Naive thymus-derived CD4-positive, alpha-beta T cell (primary cell): ENCODE measurements at regions of chr5 and their contacts with region 1.

Region 1: DNA sequence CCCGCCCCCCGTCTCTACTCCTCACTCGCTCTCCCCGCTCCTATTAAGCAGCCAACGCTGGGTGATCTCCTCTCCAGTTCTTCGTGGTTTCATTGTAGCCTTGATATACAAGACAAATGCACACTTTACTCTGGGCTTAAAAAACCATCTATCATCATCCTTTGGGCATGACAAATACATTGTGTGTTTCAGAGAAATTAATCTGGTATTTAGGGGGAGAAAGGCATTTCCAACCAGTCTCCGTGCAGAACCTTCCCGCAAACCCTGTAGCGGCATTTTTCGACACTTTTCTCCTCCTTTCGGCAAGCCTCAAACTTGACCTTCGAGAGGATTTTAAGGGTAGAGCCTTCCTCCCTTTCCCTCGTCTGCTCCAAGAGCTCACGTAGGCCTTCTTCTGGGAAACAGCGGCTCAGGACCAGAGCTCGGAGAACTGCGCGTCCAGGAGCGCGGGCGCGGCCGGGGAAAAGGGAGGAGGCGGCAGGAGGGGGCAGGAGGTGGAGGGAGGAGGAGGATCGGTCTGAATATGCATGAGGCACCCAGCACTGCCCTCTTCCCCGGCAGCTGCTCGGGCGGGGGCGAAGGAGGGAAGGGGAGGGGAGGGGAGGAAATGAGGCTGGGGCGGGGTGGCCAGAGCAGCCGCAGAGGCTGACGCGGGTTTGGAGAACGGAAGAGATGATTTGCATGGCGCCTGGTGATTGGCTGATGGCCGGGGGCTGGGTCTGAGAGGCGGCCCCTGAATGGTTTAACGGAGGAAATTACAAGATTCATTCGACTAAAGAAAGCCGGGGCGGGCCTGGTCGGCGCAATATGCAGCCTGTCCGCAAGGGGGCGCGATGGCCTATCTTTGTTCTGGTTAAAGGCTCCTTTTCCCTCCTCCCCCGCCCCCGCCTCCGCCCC is 127.5 kb downstream of the TMEM161B start:
- DNase-seq: peak; percentile 50 to 83 (median 60)
- ATAC-seq: peak; percentile 92
- H3K4me3 ChIP-seq: peak overlapping the region; percentile 43
- H3K4me3 Mint-ChIP-seq: no peak overlapping the region
- H3K27ac ChIP-seq: no peak overlapping the region
- H3K27ac Mint-ChIP-seq: no peak overlapping the region
- H3K4me1 ChIP-seq: peaks cover 19 to 24% of the 10 kb centered on the region in 2 donors
- H3K4me1 Mint-ChIP-seq: peaks cover 7 to 22% (median 9%) of the 10 kb centered on the region in 7 donors
- H3K27me3 ChIP-seq: peaks cover 17 to 28% of the 10 kb centered on the region in 2 donors
- H3K27me3 Mint-ChIP-seq: peaks cover 18 to 44% (median 38%) of the 10 kb centered on the region in 5 donors

Region 2: GRCh38 chr5:88188458-88189132 is 47.5 kb after region 1 on chr5:
- CTCF ChIA-PET with region 1: no interaction called
- POLR2A ChIA-PET with region 1: no interaction called
- intact Hi-C with region 1: loop called in 1 of 2 experiments (anchors 5 kb)
- DNase-seq: no peak
- ATAC-seq: no peak
- H3K4me3 ChIP-seq: no peak overlapping the region
- H3K4me3 Mint-ChIP-seq: no peak overlapping the region
- H3K27ac ChIP-seq: no peak overlapping the region
- H3K27ac Mint-ChIP-seq: no peak overlapping the region
- H3K4me1 ChIP-seq: no peaks in the 10 kb centered on the region
- H3K4me1 Mint-ChIP-seq: no peaks in the 10 kb centered on the region
- H3K27me3 ChIP-seq: no peaks in the 10 kb centered on the region
- H3K27me3 Mint-ChIP-seq: no peaks in the 10 kb centered on the region

Region 3: DNA sequence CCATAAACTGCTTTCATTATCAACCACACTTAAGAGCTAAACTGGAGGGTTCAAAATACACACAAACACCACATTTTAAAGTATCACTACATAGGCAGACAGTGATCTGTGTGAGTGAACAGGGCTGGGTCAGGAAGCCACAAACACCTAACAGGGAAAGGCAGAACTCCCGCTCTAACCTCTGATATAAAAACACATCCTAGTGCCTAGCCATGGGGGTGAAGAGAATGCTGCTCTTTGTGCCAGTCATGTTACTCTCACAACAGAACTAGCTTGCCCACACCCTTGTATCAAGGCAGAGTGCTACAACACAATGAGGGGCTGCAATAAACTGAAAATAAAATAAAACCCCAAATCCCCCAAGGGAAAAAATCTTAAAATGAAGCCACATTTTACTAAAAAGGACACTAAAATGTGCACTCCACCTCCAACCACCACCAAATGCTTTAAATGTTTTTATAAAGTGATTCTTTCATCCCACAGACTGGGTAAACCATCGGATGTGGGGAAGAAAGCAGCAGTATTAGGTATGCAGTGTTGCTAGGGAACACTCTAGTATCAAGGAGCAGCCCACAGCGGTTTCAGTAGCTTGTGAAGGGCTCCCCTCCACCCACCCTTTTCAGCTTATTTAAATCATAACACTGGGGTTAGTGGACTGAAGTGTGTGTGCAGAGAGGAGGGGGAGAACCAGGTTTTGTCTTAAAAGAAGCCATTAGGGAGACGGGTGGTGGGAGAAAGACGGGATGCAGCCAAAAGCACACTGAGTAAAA is 63.1 kb after region 1 on chr5:
- CTCF ChIA-PET with region 1: no interaction called
- POLR2A ChIA-PET with region 1: no interaction called
- intact Hi-C with region 1: loop called in 1 of 2 experiments (anchors 5 kb)
- DNase-seq: peak in 7 of 9 donors; percentile 6 to 49 (median 29)
- ATAC-seq: peak; percentile 95
- H3K4me3 ChIP-seq: no peak overlapping the region
- H3K4me3 Mint-ChIP-seq: peak overlapping the region in 7 of 10 donors; percentile 33 to 73 (median 61)
- H3K27ac ChIP-seq: no peak overlapping the region
- H3K27ac Mint-ChIP-seq: peak overlapping the region; percentile 16 to 91 (median 69)
- H3K4me1 ChIP-seq: peaks cover 0 to 7% of the 10 kb centered on the region in 2 donors
- H3K4me1 Mint-ChIP-seq: peaks cover 0 to 13% (median 9%) of the 10 kb centered on the region in 7 donors
- H3K27me3 ChIP-seq: no peaks in the 10 kb centered on the region
- H3K27me3 Mint-ChIP-seq: no peaks in the 10 kb centered on the region

Region 4: DNA sequence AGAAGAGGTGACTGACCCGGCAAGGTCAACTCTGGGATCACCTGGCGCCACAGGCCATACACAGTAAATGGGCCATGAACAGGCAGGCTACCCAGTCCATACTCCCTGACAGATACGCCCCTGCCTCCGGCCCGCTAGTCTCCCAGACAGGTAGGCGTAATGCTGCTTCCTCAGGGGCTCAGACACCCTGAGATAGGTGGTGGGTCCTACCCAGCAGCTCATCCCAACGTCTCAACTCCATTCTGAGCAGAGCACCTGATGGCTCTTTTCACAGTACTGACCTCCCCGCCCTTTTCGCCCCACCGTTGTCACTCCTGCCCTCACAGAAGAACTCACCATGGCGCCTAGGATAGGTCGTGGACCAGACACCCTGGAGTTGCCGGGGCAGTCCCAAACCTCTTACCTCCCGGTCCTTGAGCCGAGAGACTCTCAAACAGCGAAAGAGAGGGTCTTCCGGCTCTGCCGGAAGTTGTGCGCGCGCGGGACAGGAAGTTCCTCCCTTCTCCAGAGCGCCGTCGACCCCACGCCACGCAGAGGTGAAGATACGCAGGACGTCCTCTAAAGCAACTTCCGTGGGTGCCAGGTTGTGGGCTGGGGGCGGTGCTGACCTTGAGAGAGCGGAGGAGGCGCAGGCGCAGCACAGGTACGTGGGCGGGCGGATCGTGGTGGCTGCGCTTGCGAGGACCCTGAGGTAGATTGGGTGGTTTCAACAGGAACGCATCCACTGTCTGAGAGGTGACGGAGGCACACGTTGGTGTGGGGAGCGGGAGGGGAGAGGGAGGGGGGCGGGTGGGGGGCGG is 127.5 kb after region 1 on chr5 and contains the start of gene TMEM161B:
- CTCF ChIA-PET with region 1: no interaction called
- POLR2A ChIA-PET with region 1: no interaction called
- intact Hi-C with region 1: loop called (anchors 1 to 5 kb)
- DNase-seq: peak; percentile 81 to 97 (median 95)
- ATAC-seq: peak; percentile 98
- H3K4me3 ChIP-seq: peak within 1 kb of the TSS; percentile 99
- H3K4me3 Mint-ChIP-seq: peak within 1 kb of the TSS; percentile 99 to 100 (median 99)
- H3K27ac ChIP-seq: peak within 1 kb of the TSS; percentile 97
- H3K27ac Mint-ChIP-seq: peak within 1 kb of the TSS; percentile 94 to 100 (median 97)
- H3K4me1 ChIP-seq: peaks cover 11 to 21% of the 10 kb centered on the region in 2 donors
- H3K4me1 Mint-ChIP-seq: peaks cover 24 to 81% (median 71%) of the 10 kb centered on the region in 7 donors
- H3K27me3 ChIP-seq: no peaks in the 10 kb centered on the region
- H3K27me3 Mint-ChIP-seq: no peaks in the 10 kb centered on the region
- total RNA-seq, gene TMEM161B: 21.1 to 39.7 (median 28.4) TPM

Region 5: GRCh38 chr5:88502179-88503040 is 361.3 kb after region 1 on chr5:
- CTCF ChIA-PET with region 1: no interaction called
- POLR2A ChIA-PET with region 1: no interaction called
- intact Hi-C with region 1: loop called in 1 of 2 experiments (anchors 5 kb)
- DNase-seq: peak in 5 of 9 donors; percentile 30 to 41 (median 33)
- ATAC-seq: peak; percentile 81
- H3K4me3 ChIP-seq: peak overlapping the region; percentile 74
- H3K4me3 Mint-ChIP-seq: peak overlapping the region; percentile 89 to 100 (median 95)
- H3K27ac ChIP-seq: peak overlapping the region; percentile 70
- H3K27ac Mint-ChIP-seq: peak overlapping the region; percentile 84 to 98 (median 95)
- H3K4me1 ChIP-seq: no peaks in the 10 kb centered on the region
- H3K4me1 Mint-ChIP-seq: peaks cover 7 to 23% (median 17%) of the 10 kb centered on the region in 7 donors
- H3K27me3 ChIP-seq: no peaks in the 10 kb centered on the region
- H3K27me3 Mint-ChIP-seq: peaks cover 0 to 14% (median 6%) of the 10 kb centered on the region in 5 donors

Region 6: GRCh38 chr5:88602584-88602983 is 461.5 kb after region 1 on chr5:
- CTCF ChIA-PET with region 1: no interaction called
- POLR2A ChIA-PET with region 1: no interaction called
- intact Hi-C with region 1: loop called in 1 of 2 experiments (anchors 1 kb)
- DNase-seq: peak in 1 of 9 donors; percentile 35
- ATAC-seq: no peak
- H3K4me3 ChIP-seq: no peak overlapping the region
- H3K4me3 Mint-ChIP-seq: no peak overlapping the region
- H3K27ac ChIP-seq: no peak overlapping the region
- H3K27ac Mint-ChIP-seq: no peak overlapping the region
- H3K4me1 ChIP-seq: no peaks in the 10 kb centered on the region
- H3K4me1 Mint-ChIP-seq: peaks cover 0 to 5% (median 0%) of the 10 kb centered on the region in 7 donors
- H3K27me3 ChIP-seq: no peaks in the 10 kb centered on the region
- H3K27me3 Mint-ChIP-seq: peaks cover 3 to 20% (median 7%) of the 10 kb centered on the region in 5 donors

Region 7: DNA sequence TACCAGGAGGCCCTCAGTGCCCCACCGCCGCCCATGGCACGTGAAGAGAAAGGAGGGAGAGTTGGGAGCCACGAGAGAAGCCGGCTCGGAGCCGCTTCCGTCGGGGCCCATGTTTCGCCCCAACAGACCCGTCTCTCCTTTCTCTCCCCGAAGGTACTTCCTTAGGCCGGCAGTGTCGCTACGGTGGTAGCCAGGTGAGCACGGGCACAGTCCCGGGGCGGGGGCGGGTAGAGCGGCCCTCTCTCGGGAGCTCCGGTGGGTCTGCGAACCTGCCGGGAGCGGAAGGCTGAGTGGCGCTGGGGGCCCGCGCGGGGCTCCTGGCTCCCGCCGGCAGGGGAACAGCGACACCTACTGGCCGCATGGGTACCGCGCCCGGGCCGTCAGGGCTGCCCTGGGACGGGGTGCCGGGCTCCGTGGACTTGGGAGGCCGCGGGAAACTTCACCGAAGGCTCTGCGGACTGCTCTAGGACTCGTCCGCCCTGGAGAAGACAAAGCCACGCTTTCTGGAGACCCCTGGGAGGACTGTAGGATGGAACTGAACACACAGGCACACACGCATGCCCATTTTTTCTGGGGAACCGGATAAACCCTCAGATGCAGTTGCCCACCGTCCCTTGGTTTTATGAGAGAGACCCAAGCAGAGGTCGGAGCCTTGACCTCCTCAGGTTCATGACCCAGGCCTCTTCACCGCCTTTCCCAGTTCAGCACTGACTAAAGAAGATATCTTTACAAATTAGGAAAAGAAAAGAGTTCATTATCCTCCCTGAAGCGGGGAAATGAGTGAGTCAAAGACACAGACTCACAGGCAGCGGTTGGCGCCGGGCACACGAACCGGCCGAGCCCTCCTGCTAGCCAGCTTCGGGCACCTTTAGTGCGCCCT is 539.4 kb after region 1 on chr5:
- CTCF ChIA-PET with region 1: no interaction called
- POLR2A ChIA-PET with region 1: no interaction called
- intact Hi-C with region 1: loop called (anchors 2 kb)
- DNase-seq: peak; percentile 53 to 87 (median 77)
- ATAC-seq: peak; percentile 93
- H3K4me3 ChIP-seq: peak overlapping the region; percentile 36
- H3K4me3 Mint-ChIP-seq: peak overlapping the region; percentile 30 to 65 (median 58)
- H3K27ac ChIP-seq: no peak overlapping the region
- H3K27ac Mint-ChIP-seq: peak overlapping the region in 2 of 9 donors; percentile 25 to 30
- H3K4me1 ChIP-seq: peaks cover 0 to 6% of the 10 kb centered on the region in 2 donors
- H3K4me1 Mint-ChIP-seq: peaks cover 15 to 37% (median 25%) of the 10 kb centered on the region in 7 donors
- H3K27me3 ChIP-seq: peaks cover 32 to 60% of the 10 kb centered on the region in 2 donors
- H3K27me3 Mint-ChIP-seq: peaks cover 78 to 92% (median 80%) of the 10 kb centered on the region in 5 donors